ENCODE measurements at regions of chr1 and their contacts with region 1.

Region 1: GRCh38 chr1:159854693-159855192 is 7.7 kb downstream of the VSIG8 start:
- DNase-seq: peak; percentile 53 to 72 (median 70)
- ATAC-seq: peak; percentile 91
- H3K4me3 ChIP-seq: peak overlapping the region; percentile 69
- H3K4me3 Mint-ChIP-seq: peak overlapping the region; percentile 80 to 96 (median 91)
- H3K27ac ChIP-seq: peak overlapping the region; percentile 75
- H3K27ac Mint-ChIP-seq: peak overlapping the region in 8 of 9 donors; percentile 67 to 94 (median 88)
- H3K4me1 ChIP-seq: peaks cover 0 to 3% of the 10 kb centered on the region in 2 donors
- H3K4me1 Mint-ChIP-seq: peaks cover 14 to 37% (median 23%) of the 10 kb centered on the region in 7 donors
- H3K27me3 ChIP-seq: no peaks in the 10 kb centered on the region
- H3K27me3 Mint-ChIP-seq: peaks cover 0 to 32% (median 0%) of the 10 kb centered on the region in 5 donors

Region 2: GRCh38 chr1:159821171-159821867 is 33.4 kb before region 1 on chr1:
- CTCF ChIA-PET with region 1: no interaction called
- POLR2A ChIA-PET with region 1: no interaction called
- intact Hi-C with region 1: no loop called
- DNase-seq: no peak
- ATAC-seq: peak; percentile 37
- H3K4me3 ChIP-seq: no peak overlapping the region
- H3K4me3 Mint-ChIP-seq: no peak overlapping the region
- H3K27ac ChIP-seq: no peak overlapping the region
- H3K27ac Mint-ChIP-seq: no peak overlapping the region
- H3K4me1 ChIP-seq: peaks cover 12 to 28% of the 10 kb centered on the region in 2 donors
- H3K4me1 Mint-ChIP-seq: peaks cover 14 to 32% (median 18%) of the 10 kb centered on the region in 7 donors
- H3K27me3 ChIP-seq: no peaks in the 10 kb centered on the region
- H3K27me3 Mint-ChIP-seq: peaks cover 0 to 58% (median 0%) of the 10 kb centered on the region in 5 donors

Region 3: GRCh38 chr1:159831412-159832141 is 23.2 kb before region 1 on chr1:
- CTCF ChIA-PET with region 1: no interaction called
- POLR2A ChIA-PET with region 1: no interaction called
- intact Hi-C with region 1: no loop called
- DNase-seq: no peak
- ATAC-seq: no peak
- H3K4me3 ChIP-seq: no peak overlapping the region
- H3K4me3 Mint-ChIP-seq: no peak overlapping the region
- H3K27ac ChIP-seq: no peak overlapping the region
- H3K27ac Mint-ChIP-seq: no peak overlapping the region
- H3K4me1 ChIP-seq: peaks cover 16 to 23% of the 10 kb centered on the region in 2 donors
- H3K4me1 Mint-ChIP-seq: peaks cover 26 to 35% (median 29%) of the 10 kb centered on the region in 7 donors
- H3K27me3 ChIP-seq: no peaks in the 10 kb centered on the region
- H3K27me3 Mint-ChIP-seq: peaks cover 0 to 41% (median 0%) of the 10 kb centered on the region in 5 donors

Region 4: DNA sequence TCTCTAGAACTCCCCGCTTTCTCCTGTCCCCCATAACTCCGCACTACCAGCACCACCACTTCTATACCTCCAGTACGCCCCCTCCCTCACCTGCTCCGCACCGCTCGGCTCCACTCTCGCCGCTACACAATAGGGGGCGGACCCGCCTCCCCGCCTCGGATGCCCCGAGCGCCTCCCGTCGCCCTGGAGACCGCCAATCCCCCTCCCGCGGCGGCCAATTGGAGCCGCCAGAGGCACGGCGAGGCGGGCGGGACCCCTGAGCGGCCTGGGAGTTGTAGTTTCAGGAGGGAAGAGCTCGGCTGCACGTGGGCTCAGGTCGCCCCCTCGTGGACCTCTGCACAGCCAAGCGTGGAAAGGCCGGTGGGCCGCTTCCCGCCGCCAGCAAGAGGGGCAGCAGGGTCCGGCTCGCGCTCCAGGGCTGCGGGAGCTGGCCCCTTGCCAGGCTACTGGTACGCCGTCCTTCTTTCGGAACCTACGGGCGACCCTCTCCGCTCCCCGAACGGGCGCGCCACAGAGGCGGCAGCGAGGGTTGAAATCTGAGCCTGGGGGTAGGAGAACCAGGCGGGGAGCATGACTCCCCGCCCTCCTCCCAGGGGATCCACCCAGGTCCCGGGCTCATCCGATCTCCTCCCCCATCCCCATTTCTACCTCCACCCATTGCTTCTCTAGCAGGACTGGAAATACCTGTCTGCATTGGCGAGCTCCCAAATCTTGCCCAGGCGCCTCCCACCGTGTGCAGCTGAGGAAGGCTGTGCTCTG is 90.9 kb after region 1 on chr1 and contains the start of gene IGSF9:
- CTCF ChIA-PET with region 1: no interaction called
- POLR2A ChIA-PET with region 1: no interaction called
- intact Hi-C with region 1: loop called in 1 of 2 experiments (anchors 5 kb)
- DNase-seq: peak in 8 of 9 donors; percentile 60 to 84 (median 76)
- ATAC-seq: peak; percentile 95
- H3K4me3 ChIP-seq: peak within 1 kb of the TSS; percentile 57
- H3K4me3 Mint-ChIP-seq: peak within 1 kb of the TSS; percentile 50 to 79 (median 72)
- H3K27ac ChIP-seq: no peak within 1 kb of the TSS
- H3K27ac Mint-ChIP-seq: peak within 1 kb of the TSS in 3 of 9 donors; percentile 9 to 69 (median 17)
- H3K4me1 ChIP-seq: peaks cover 4 to 7% of the 10 kb centered on the region in 2 donors
- H3K4me1 Mint-ChIP-seq: peaks cover 8 to 18% (median 14%) of the 10 kb centered on the region in 7 donors
- H3K27me3 ChIP-seq: peaks cover 8 to 11% of the 10 kb centered on the region in 2 donors
- H3K27me3 Mint-ChIP-seq: peaks cover 23 to 73% (median 30%) of the 10 kb centered on the region in 5 donors
- total RNA-seq, gene IGSF9: 0.12 TPM in 1 of 5 experiments, not detected in the others

Region 5: DNA sequence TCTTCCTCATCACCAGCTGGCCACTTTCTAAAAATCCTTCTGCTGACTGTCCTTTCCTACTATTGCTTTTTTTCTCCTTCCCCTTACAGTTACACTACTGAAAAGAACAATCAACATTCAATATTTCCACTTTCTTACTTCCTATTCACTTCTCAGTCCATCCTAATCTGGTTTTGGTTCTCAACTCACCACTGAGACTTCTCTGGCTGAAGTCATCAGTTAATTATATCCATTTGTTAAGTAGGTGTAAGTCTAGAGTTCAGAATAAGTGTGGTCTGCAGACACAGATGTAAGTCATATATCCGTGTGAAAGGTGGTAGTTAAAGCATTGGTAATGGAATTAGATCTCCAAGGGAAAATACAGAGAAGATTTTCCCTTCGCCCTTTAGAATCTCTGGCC is 371.9 kb after region 1 on chr1:
- CTCF ChIA-PET with region 1: no interaction called
- POLR2A ChIA-PET with region 1: no interaction called
- intact Hi-C with region 1: no loop called
- DNase-seq: no peak
- ATAC-seq: no peak
- H3K4me3 ChIP-seq: no peak overlapping the region
- H3K4me3 Mint-ChIP-seq: no peak overlapping the region
- H3K27ac ChIP-seq: no peak overlapping the region
- H3K27ac Mint-ChIP-seq: no peak overlapping the region
- H3K4me1 ChIP-seq: no peaks in the 10 kb centered on the region
- H3K4me1 Mint-ChIP-seq: no peaks in the 10 kb centered on the region
- H3K27me3 ChIP-seq: no peaks in the 10 kb centered on the region
- H3K27me3 Mint-ChIP-seq: no peaks in the 10 kb centered on the region

Region 6: DNA sequence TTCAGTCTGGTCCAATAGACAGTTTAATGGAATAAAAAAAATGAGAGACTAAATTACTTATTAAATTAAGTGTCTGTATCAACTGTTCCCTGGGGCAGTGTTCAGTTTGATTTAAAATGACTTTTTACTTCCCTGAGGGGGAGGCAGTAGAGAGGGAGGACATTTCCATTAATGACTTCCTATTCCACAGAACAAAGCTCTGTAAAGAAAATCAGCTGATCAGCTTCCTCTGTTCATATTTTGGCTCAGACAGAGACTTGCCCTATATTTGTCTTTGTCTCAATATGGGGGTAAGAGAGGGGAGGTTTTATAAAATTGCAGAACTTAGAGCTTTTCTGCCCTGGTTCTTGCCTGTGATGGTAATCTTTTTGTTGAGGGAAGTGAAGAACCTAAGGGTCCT is 1504.5 kb after region 1 on chr1:
- CTCF ChIA-PET with region 1: no interaction called
- POLR2A ChIA-PET with region 1: no interaction called
- intact Hi-C with region 1: no loop called
- DNase-seq: no peak
- ATAC-seq: peak; percentile 37
- H3K4me3 ChIP-seq: no peak overlapping the region
- H3K4me3 Mint-ChIP-seq: no peak overlapping the region
- H3K27ac ChIP-seq: no peak overlapping the region
- H3K27ac Mint-ChIP-seq: peak overlapping the region in 5 of 9 donors; percentile 10 to 60 (median 32)
- H3K4me1 ChIP-seq: no peaks in the 10 kb centered on the region
- H3K4me1 Mint-ChIP-seq: peaks cover 0 to 12% (median 10%) of the 10 kb centered on the region in 7 donors
- H3K27me3 ChIP-seq: no peaks in the 10 kb centered on the region
- H3K27me3 Mint-ChIP-seq: no peaks in the 10 kb centered on the region